ENCODE measurements at regions of chr17 and their contacts with region 1.

Region 1: DNA sequence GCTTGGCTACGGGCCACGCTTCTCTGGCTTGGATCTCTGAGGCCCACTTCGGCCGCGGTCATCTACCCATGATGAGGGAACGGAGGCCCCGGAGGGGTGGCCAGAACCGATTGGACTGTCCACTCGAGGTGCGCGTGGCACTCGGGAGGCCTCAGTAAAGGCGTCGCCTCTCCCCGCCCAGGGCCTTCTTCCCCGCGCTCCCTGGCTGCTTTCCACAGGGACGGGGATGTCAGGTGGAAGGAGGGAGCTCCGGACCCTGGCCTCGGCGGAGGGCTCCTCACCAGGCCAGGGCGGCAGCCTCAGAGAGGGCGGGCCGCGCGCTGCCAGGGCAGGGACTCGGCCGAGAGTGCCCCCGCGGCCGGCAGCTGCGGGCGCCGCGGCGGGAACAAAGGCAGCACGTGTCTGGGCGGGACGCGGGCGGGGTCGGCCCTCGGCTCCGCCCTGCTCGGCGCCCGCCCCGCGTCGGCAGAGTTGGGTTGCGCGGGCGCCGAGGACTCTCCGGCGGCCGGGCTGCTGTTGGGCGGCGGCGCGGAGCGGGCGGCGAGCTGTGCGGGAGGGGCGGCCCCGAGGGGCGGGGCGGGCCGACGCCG is 587 bp upstream of the CDK5R1 start:
- DNase-seq: peak; percentile 71 to 89
- ATAC-seq: peak; percentile 85
- H3K4me3 ChIP-seq: peak overlapping the region; percentile 57 to 73
- H3K27ac ChIP-seq: peak overlapping the region in 1 of 2 donors; percentile 28
- H3K4me1 ChIP-seq: no peaks in the 10 kb centered on the region
- H3K27me3 ChIP-seq: no peaks in the 10 kb centered on the region

Region 2: DNA sequence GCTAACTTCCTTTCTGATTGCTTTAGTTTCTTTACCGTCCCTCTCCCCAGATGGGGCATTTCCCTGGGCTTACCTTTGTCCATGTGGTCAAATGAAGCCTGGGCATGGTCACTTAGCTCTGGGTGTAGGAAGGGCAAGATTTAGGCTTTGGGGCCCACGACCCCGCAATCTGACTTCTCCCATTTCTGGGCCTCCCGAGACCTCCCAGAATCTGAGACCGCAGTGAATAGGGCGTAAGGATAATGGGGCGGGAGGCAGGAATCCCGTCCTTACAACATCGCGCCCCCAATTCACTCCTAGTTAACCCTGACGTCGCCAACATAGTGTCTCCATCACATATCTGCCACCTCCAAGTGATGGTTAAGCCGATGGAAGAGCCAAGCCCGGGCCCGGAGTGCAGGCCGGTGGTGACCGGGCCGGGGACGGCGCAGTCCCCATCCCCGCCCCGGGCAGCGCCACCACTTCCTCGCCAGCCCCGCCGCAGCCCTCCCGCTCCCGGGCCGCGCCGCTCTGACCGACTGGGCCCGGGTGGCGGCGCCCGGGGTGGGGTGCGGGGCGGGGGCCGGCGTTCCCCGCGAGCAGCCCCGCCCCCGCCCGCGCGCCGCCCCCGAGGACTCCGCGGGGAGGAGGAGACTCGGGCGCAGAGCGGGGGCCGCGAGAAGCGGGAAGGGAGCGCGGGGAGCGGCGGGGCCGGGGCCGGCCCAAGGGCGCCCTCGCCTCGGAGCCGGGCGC is 220.8 kb before region 1 on chr17 and contains the start of gene RHBDL3:
- intact Hi-C with region 1: no loop called
- DNase-seq: peak in 1 of 2 donors; percentile 83
- ATAC-seq: peak; percentile 56
- H3K4me3 ChIP-seq: peak within 1 kb of the TSS; percentile 66 to 89
- H3K27ac ChIP-seq: no peak within 1 kb of the TSS
- H3K4me1 ChIP-seq: no peaks in the 10 kb centered on the region
- H3K27me3 ChIP-seq: no peaks in the 10 kb centered on the region
- total RNA-seq, gene RHBDL3: 0.29 to 1.0 TPM

Region 3: GRCh38 chr17:32519228-32520103 is 33.3 kb after region 1 on chr17:
- intact Hi-C with region 1: no loop called
- DNase-seq: peak in 1 of 2 donors; percentile 83
- ATAC-seq: peak; percentile 69
- H3K4me3 ChIP-seq: peak overlapping the region in 1 of 2 donors; percentile 56
- H3K27ac ChIP-seq: no peak overlapping the region
- H3K4me1 ChIP-seq: no peaks in the 10 kb centered on the region
- H3K27me3 ChIP-seq: no peaks in the 10 kb centered on the region

Region 4: GRCh38 chr17:32659419-32659842 is 173.2 kb after region 1 on chr17:
- intact Hi-C with region 1: loop called in 1 of 2 experiments (anchors 5 kb)
- DNase-seq: peak; percentile 76 to 85
- ATAC-seq: peak; percentile 89
- H3K4me3 ChIP-seq: no peak overlapping the region
- H3K27ac ChIP-seq: no peak overlapping the region
- H3K4me1 ChIP-seq: peaks cover 0 to 4% of the 10 kb centered on the region in 2 donors
- H3K27me3 ChIP-seq: no peaks in the 10 kb centered on the region

Region 5: DNA sequence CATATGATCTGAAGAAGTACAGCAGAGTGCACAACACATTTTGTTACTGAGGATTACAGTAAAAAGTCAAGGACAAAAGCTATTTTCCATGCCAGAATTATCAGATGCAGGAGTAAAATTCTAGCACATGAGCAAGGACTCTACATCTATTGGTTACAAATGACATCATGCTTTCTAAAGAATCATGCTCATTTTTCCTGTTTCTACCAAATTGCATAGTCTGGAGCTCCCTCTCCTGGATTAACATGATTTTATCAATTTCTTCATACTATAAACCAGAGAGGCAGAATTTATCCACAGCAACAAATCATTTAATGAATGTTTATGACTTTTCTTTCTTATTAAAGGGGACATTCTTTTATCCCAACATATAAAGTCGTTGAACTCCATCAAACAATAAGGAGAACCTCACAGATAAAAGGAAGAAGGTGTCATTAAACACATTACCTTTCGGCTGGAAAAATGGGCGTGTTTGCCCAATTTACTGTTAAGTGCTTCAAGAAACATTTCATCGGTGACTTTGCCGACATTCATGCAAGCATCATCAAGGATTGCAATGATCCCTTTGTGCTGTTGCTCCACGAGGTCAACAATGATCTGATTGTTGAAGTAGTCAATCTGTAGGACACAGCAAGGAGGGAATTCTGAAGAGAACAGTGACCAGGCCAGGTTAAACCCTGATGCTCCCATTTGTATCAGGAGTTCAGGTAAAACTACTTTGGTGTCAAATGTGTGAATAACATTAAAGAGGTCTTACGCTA is 269.0 kb after region 1 on chr17:
- intact Hi-C with region 1: loop called (anchors 5 kb)
- DNase-seq: no peak
- ATAC-seq: peak; percentile 52
- H3K4me3 ChIP-seq: no peak overlapping the region
- H3K27ac ChIP-seq: no peak overlapping the region
- H3K4me1 ChIP-seq: no peaks in the 10 kb centered on the region
- H3K27me3 ChIP-seq: no peaks in the 10 kb centered on the region

Region 6: GRCh38 chr17:32909787-32910369 is 423.7 kb after region 1 on chr17:
- intact Hi-C with region 1: loop called in 1 of 2 experiments (anchors 10 kb)
- DNase-seq: peak in 1 of 2 donors; percentile 76
- ATAC-seq: peak; percentile 85
- H3K4me3 ChIP-seq: no peak overlapping the region
- H3K27ac ChIP-seq: no peak overlapping the region
- H3K4me1 ChIP-seq: no peaks in the 10 kb centered on the region
- H3K27me3 ChIP-seq: no peaks in the 10 kb centered on the region

Region 7: DNA sequence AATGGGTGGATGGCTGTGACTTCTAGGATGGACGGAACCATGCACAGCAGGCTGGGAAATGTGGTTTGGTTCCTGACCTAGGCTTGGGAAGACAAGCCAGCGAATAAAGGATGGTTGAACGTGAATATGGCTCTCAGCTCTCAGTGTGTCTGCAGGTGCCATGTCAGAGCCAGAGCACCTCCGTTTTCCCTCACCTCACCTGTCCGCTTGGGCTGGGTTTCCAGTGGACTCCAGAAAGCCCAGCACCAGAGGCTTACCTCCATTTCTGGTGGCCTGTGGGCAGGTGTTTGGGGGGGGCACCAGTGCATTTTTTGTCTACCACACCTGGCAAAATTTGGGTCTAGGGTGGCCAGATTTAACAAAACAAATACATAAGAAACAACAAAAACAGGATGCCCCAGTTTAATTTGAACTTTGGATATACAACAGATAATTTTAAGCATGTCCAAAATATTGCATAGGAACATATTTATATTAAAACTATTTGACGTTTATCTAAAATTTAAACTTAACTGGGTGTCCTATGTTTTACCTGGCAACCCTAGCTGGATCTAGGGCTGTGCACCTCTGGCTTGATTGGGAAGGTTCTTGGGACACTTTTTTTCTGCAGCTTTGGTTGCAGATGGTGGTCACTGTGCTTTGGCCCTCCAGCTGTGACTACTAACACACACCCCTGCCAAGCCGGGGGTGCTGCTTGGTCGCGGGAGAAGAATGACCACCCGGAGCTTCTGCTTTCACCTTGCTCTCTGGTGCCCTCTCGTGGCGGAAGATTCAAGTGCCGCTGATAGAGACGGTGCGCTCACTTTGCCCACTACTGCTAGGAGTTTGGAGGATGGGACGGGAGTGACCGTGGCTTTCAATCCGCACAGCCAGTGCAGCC is 511.8 kb after region 1 on chr17:
- intact Hi-C with region 1: loop called in 1 of 2 experiments (anchors 10 kb)
- DNase-seq: peak; percentile 84 to 93
- ATAC-seq: peak; percentile 51
- H3K4me3 ChIP-seq: no peak overlapping the region
- H3K27ac ChIP-seq: no peak overlapping the region
- H3K4me1 ChIP-seq: no peaks in the 10 kb centered on the region
- H3K27me3 ChIP-seq: no peaks in the 10 kb centered on the region